Posterior cingulate gyrus (tissue), 11 donors: ENCODE measurements at regions of chr6 and their contacts with region 1.

Region 1: GRCh38 chr6:133512410-133513016 is 271.4 kb downstream of the EYA4 start:
- DNase-seq: peak in 9 of 10 donors; percentile 29 to 92 (median 67)

Region 2: DNA sequence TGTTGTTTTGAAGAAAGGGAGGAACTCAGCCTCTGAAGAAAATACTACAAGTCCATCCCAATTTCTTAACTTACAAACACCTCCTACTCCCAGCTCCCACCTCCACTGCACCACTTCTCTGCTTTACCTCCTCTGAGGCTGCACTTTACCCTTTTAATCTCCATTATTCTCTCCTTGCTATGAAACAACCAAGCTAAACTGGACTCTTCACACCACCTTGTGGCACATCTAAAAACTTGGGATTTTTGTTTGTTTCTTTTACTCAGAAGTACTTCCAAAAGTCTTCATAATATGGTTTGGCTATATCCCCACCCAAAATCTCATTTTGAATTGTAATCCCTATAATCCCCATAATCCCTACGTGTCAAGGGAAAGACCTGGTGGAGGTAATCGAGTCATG is 1253.4 kb before region 1 on chr6:
- intact Hi-C with region 1: no loop called
- DNase-seq: no peak

Region 3: DNA sequence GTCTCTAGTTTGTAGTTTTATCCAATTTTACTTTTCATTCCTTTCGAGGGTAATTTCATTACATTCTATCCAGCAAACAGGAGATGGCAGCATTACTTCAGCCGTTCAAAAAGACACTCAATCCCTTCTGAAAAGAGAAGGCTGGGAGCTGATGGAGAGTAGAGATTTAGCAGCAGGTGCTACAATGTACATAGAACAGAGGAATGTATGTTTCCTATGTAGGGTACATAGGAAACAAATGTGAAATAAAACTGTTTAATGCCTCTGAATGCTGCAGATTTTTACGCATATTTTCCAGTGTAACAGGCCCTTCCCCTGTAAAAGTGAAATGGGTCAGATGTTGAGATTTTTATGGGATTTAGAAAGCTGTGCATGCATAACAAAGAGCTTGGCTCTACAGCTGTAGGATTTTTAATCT is 682.2 kb before region 1 on chr6:
- intact Hi-C with region 1: loop called (anchors 2 kb)
- DNase-seq: peak in 1 of 10 donors; percentile 21

Region 4: GRCh38 chr6:132962936-132963868 is 549.3 kb before region 1 on chr6:
- intact Hi-C with region 1: loop called (anchors 2 kb)
- DNase-seq: peak in 7 of 10 donors; percentile 54 to 88 (median 57)

Region 5: GRCh38 chr6:133184798-133185372 is 327.6 kb before region 1 on chr6:
- intact Hi-C with region 1: loop called (anchors 1 kb)
- DNase-seq: no peak

Region 6: GRCh38 chr6:133241086-133241900 is 271.2 kb before region 1 on chr6 and contains the start of gene EYA4:
- intact Hi-C with region 1: loop called (anchors 5 kb)
- DNase-seq: peak in 7 of 10 donors; percentile 12 to 86 (median 50)